ENCODE measurements at regions of chr2 and their contacts with region 1.

Region 1: DNA sequence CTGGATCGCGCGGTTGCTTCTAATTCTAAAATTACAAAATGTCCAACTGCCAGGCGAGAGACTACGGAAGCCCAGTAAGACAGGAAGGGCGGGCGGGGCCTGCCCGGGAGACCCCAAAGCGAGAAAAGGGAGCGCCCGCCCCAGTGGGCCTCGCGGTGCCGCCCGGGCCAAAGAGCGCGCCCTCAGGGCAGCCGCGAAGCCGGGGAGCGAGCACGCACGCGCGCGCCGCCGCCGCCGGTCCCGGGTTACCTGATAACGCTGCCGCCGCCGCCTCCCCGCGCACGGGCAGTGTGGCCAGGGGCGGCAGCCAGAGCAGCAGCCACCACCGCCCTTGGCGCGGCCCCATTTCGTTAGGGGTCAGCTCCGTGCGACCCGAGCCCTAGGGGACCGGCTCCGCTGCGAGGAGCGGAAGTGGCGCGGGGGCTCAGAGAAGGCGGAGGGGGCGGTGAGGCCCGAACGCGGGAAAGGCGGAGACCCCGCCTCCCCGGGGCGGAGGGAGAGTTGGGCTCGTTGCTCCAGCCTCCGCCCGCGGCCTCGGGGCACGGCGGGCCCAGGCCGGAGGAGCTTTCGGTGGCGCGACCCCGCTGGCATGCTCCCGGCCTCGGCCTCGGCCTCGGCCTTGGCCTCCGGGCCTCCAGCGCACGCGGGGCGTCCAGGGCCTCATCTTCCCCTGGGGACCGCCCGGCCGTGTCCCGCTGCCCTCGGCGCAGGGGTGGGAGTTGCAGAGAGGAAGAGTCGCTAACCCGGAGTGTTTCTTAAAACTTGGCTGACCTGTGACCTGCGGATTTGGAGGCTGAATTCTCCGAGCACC is at the start of gene NEMP2:
- DNase-seq: peak; percentile 83
- H3K4me3 ChIP-seq: peak within 1 kb of the TSS; percentile 76
- H3K27ac ChIP-seq: peak within 1 kb of the TSS; percentile 93
- H3K4me1 ChIP-seq: no peaks in the 10 kb centered on the region
- H3K27me3 ChIP-seq: no peaks in the 10 kb centered on the region
- CTCF ChIP-seq: no peak
- total RNA-seq, gene NEMP2: 3.6 to 5.1 TPM

Region 2: GRCh38 chr2:190277234-190278112 is 257.0 kb before region 1 on chr2:
- intact Hi-C with region 1: no loop called
- DNase-seq: no peak
- H3K4me3 ChIP-seq: no peak overlapping the region
- H3K27ac ChIP-seq: no peak overlapping the region
- H3K4me1 ChIP-seq: no peaks in the 10 kb centered on the region
- H3K27me3 ChIP-seq: no peaks in the 10 kb centered on the region
- CTCF ChIP-seq: peak; percentile 30

Region 3: GRCh38 chr2:190649798-190650390 is 115.4 kb after region 1 on chr2:
- intact Hi-C with region 1: loop called (anchors 5 kb)
- DNase-seq: peak; percentile 31
- H3K4me3 ChIP-seq: peak overlapping the region; percentile 71
- H3K27ac ChIP-seq: peak overlapping the region; percentile 91
- H3K4me1 ChIP-seq: no peaks in the 10 kb centered on the region
- H3K27me3 ChIP-seq: no peaks in the 10 kb centered on the region
- CTCF ChIP-seq: no peak

Measured in colonic mucosa (tissue), 4 donors.